ENCODE measurements at regions of chr17 and their contacts with region 1.

Region 1: DNA sequence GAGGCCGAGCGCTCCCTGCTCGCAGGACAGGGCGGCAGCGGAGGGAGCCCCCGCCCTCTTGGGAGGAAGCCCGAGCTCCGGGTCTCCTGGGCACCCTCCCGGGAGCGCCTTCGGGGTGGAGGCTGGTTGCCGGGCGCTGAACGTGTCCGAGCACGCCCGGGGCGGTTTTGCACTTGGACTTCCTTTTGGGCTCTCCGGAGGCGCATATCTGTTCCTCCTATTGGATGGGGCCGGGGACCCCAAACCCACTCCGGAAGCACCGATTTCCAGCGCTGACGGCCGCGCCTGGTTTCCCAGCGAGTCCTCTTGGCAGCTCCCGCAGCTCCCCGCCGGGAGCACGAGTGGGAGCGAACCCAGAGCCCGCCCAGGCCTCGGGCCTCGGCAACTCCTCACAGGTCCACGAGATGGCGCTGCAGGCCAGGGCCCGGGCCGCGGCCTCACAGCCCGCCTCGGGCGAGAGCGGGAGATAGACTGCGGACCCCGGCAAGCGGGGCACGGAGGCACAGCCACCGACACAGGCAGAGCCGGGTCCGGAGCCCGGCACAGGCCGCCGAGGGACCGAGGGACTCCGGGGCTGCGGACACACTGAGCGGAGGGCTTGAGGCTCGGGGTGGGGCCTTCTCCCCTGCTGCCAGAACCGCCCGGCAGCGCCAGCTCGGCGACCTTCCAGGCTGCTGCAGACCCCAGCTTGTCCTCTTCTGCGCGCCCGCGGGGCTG is 12.7 kb downstream of the TBX2 start:
- DNase-seq: peak; percentile 84
- ATAC-seq: peak; percentile 76
- H3K4me3 Mint-ChIP-seq: peak overlapping the region; percentile 74
- H3K27ac Mint-ChIP-seq: no peak overlapping the region
- H3K4me1 Mint-ChIP-seq: peaks cover 35% of the 10 kb centered on the region
- H3K27me3 Mint-ChIP-seq: peaks cover 29% of the 10 kb centered on the region
- CTCF ChIP-seq: peak; percentile 67

Region 2: GRCh38 chr17:61002316-61002736 is 410.0 kb before region 1 on chr17:
- CTCF ChIA-PET with region 1: no interaction called
- POLR2A ChIA-PET with region 1: no interaction called
- intact Hi-C with region 1: loop called (anchors 5 kb)
- DNase-seq: no peak
- ATAC-seq: no peak
- H3K4me3 Mint-ChIP-seq: no peak overlapping the region
- H3K27ac Mint-ChIP-seq: no peak overlapping the region
- H3K4me1 Mint-ChIP-seq: no peaks in the 10 kb centered on the region
- H3K27me3 Mint-ChIP-seq: no peaks in the 10 kb centered on the region
- CTCF ChIP-seq: peak; percentile 35

Region 3: DNA sequence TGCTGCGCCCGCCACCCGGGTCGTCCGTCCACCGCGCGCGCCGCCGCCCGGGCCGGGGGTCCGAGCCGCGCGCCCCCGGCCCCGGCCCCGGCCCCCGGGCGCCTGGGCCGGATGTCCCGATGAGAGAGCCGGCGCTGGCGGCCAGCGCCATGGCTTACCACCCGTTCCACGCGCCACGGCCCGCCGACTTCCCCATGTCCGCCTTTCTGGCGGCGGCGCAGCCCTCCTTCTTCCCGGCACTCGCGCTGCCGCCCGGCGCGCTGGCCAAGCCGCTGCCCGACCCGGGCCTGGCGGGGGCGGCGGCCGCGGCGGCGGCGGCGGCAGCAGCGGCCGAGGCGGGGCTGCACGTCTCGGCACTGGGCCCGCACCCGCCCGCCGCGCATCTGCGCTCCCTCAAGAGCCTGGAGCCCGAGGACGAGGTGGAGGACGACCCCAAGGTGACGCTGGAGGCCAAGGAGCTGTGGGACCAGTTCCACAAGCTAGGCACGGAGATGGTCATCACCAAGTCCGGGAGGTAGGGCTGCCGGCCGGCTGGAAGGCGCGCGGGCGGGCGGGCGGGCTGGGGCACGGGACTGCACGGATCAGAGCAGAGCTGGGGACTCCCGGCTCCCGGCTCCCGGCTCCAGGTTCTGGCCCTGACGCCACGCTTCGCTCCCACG is 12.1 kb before region 1 on chr17:
- CTCF ChIA-PET with region 1: interaction called, 14 read pairs
- POLR2A ChIA-PET with region 1: no interaction called
- intact Hi-C with region 1: loop called (anchors 1 kb)
- DNase-seq: no peak
- ATAC-seq: no peak
- H3K4me3 Mint-ChIP-seq: peak overlapping the region; percentile 70
- H3K27ac Mint-ChIP-seq: no peak overlapping the region
- H3K4me1 Mint-ChIP-seq: peaks cover 51% of the 10 kb centered on the region
- H3K27me3 Mint-ChIP-seq: peaks cover 51% of the 10 kb centered on the region
- CTCF ChIP-seq: no peak

Region 4: GRCh38 chr17:61583242-61583641 is 170.9 kb after region 1 on chr17:
- CTCF ChIA-PET with region 1: no interaction called
- POLR2A ChIA-PET with region 1: no interaction called
- intact Hi-C with region 1: loop called (anchors 1 kb)
- DNase-seq: no peak
- ATAC-seq: no peak
- H3K4me3 Mint-ChIP-seq: no peak overlapping the region
- H3K27ac Mint-ChIP-seq: no peak overlapping the region
- H3K4me1 Mint-ChIP-seq: peaks cover 5% of the 10 kb centered on the region
- H3K27me3 Mint-ChIP-seq: peaks cover 21% of the 10 kb centered on the region
- CTCF ChIP-seq: no peak

Region 5: GRCh38 chr17:61862975-61863800 is 450.9 kb after region 1 on chr17 and contains the start of gene BRIP1:
- CTCF ChIA-PET with region 1: no interaction called
- POLR2A ChIA-PET with region 1: no interaction called
- intact Hi-C with region 1: loop called (anchors 1 kb)
- DNase-seq: peak; percentile 70
- ATAC-seq: peak; percentile 99
- H3K4me3 Mint-ChIP-seq: peak within 1 kb of the TSS; percentile 94
- H3K27ac Mint-ChIP-seq: peak within 1 kb of the TSS; percentile 83
- H3K4me1 Mint-ChIP-seq: peaks cover 18% of the 10 kb centered on the region
- H3K27me3 Mint-ChIP-seq: no peaks in the 10 kb centered on the region
- CTCF ChIP-seq: no peak
- total RNA-seq, gene BRIP1: 2.0 and 2.5 TPM in 2 replicates

Measured in activated B cell treated with CpG ODN at 0.5 μM for 24 hours (primary cell).